Breast epithelium (tissue), 4 donors: ENCODE measurements at regions of chr7 and their contacts with region 1.

Region 1: GRCh38 chr7:98202367-98203195 is 8.7 kb upstream of the BHLHA15 start:
- DNase-seq: no peak
- H3K4me3 ChIP-seq: no peak overlapping the region
- H3K27ac ChIP-seq: no peak overlapping the region
- H3K4me1 ChIP-seq: no peaks in the 10 kb centered on the region
- H3K27me3 ChIP-seq: no peaks in the 10 kb centered on the region
- CTCF ChIP-seq: no peak
- POLR2A ChIP-seq: no peak

Region 2: GRCh38 chr7:98168181-98168905 is 34.2 kb before region 1 on chr7:
- intact Hi-C with region 1: no loop called
- DNase-seq: peak in 1 of 2 donors; percentile 56
- H3K4me3 ChIP-seq: no peak overlapping the region
- H3K27ac ChIP-seq: no peak overlapping the region
- H3K4me1 ChIP-seq: no peaks in the 10 kb centered on the region
- H3K27me3 ChIP-seq: no peaks in the 10 kb centered on the region
- CTCF ChIP-seq: peak; percentile 33 to 88 (median 85)
- POLR2A ChIP-seq: no peak

Region 3: DNA sequence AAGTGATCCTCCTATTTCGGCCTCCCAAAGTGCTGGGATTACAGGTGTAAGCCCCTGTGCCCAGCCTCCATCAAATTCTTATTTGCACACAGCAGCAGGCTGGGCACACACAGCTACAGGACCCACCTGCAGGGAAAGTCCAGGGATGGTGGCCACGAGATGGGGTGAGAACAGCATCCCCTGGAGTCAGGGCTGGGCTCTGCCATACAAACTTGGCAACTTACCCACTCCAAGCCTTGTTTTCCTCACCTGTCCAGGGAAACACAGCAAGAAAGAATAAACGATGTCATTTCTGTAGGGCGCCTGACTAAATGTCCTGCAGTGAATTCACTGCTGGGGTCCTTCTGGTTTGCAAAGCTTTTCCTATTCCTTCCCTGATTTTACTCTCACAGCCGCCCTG is 1075.6 kb after region 1 on chr7:
- intact Hi-C with region 1: loop called (anchors 5 kb)
- DNase-seq: no peak
- H3K4me3 ChIP-seq: no peak overlapping the region
- H3K27ac ChIP-seq: no peak overlapping the region
- H3K4me1 ChIP-seq: no peaks in the 10 kb centered on the region
- H3K27me3 ChIP-seq: no peaks in the 10 kb centered on the region
- CTCF ChIP-seq: no peak
- POLR2A ChIP-seq: no peak